OCI-LY7 (cell line): ENCODE measurements at regions of chr3 and their contacts with region 1.

Region 1: GRCh38 chr3:78988324-78988723 is 779.5 kb downstream of the ROBO1 start:
- DNase-seq: no peak
- H3K4me3 ChIP-seq: no peak overlapping the region
- H3K27ac ChIP-seq: no peak overlapping the region
- H3K4me1 ChIP-seq: no peaks in the 10 kb centered on the region
- CTCF ChIP-seq: peak; percentile 24; the same call in 1 of the 2 replicates

Region 2: DNA sequence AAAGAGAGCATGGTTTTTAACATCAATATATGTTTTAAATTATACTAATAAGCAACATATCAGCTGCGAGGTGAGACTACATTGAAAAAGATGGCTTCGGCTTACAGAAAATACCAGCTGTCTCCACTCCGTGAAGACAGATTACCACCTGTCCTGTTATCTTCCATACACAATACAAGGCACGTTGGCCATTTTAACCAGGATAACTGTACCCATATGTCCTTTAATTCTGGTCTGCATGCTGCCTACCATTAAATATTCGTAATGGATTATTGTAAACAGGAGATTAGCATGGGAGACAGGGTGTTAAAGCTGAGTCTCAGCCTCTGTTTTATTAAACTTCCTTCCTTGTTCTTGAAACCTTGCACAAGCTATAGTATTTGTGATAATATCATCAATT is 76.1 kb before region 1 on chr3:
- CTCF ChIA-PET with region 1: no interaction called
- POLR2A ChIA-PET with region 1: no interaction called
- intact Hi-C with region 1: no loop called
- DNase-seq: no peak
- H3K4me3 ChIP-seq: no peak overlapping the region
- H3K27ac ChIP-seq: no peak overlapping the region
- H3K4me1 ChIP-seq: no peaks in the 10 kb centered on the region
- CTCF ChIP-seq: no peak

Region 3: GRCh38 chr3:78972617-78973301 is 15.6 kb before region 1 on chr3:
- CTCF ChIA-PET with region 1: no interaction called
- POLR2A ChIA-PET with region 1: interaction called, 10 read pairs
- intact Hi-C with region 1: no loop called
- DNase-seq: no peak
- H3K4me3 ChIP-seq: no peak overlapping the region
- H3K27ac ChIP-seq: no peak overlapping the region
- H3K4me1 ChIP-seq: no peaks in the 10 kb centered on the region
- CTCF ChIP-seq: no peak